ENCODE measurements at regions of chr2 and their contacts with region 1.

Region 1: GRCh38 chr2:195498176-195498575 is 158.8 kb upstream of the SLC39A10 start:
- DNase-seq: peak; percentile 22
- ATAC-seq: peak; percentile 66
- H3K4me3 Mint-ChIP-seq: no peak overlapping the region
- H3K27ac Mint-ChIP-seq: no peak overlapping the region
- H3K4me1 Mint-ChIP-seq: peaks cover 18% of the 10 kb centered on the region
- H3K27me3 Mint-ChIP-seq: no peaks in the 10 kb centered on the region
- CTCF ChIP-seq: no peak

Region 2: GRCh38 chr2:194968558-194968957 is 529.6 kb before region 1 on chr2:
- CTCF ChIA-PET with region 1: no interaction called
- POLR2A ChIA-PET with region 1: no interaction called
- intact Hi-C with region 1: no loop called
- DNase-seq: no peak
- ATAC-seq: no peak
- H3K4me3 Mint-ChIP-seq: no peak overlapping the region
- H3K27ac Mint-ChIP-seq: no peak overlapping the region
- H3K4me1 Mint-ChIP-seq: no peaks in the 10 kb centered on the region
- H3K27me3 Mint-ChIP-seq: no peaks in the 10 kb centered on the region
- CTCF ChIP-seq: no peak

Region 3: DNA sequence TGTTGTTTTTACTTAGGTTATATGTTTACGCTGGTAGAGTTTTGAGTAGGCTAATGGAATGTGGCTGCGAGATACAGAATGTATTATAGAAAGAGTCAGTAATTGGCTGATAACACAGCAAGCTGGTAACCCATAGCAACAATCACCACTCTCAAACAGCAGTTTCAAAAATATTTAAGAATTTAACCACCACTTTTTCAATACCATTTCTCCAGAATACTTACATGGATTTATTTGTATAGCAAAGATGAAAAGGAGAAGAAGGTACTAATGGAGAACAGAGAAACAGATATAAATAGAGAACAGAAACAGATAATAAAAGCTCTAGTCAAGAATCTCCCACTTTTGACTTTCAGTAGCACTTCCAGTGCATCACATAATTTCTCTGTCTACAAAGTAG is 29.4 kb before region 1 on chr2:
- CTCF ChIA-PET with region 1: no interaction called
- POLR2A ChIA-PET with region 1: no interaction called
- intact Hi-C with region 1: no loop called
- DNase-seq: no peak
- ATAC-seq: no peak
- H3K4me3 Mint-ChIP-seq: no peak overlapping the region
- H3K27ac Mint-ChIP-seq: no peak overlapping the region
- H3K4me1 Mint-ChIP-seq: peaks cover 4% of the 10 kb centered on the region
- H3K27me3 Mint-ChIP-seq: no peaks in the 10 kb centered on the region
- CTCF ChIP-seq: no peak

Region 4: GRCh38 chr2:195513119-195513518 is 14.9 kb after region 1 on chr2:
- CTCF ChIA-PET with region 1: interaction called, 10 read pairs
- POLR2A ChIA-PET with region 1: no interaction called
- intact Hi-C with region 1: loop called (anchors 2 kb)
- DNase-seq: no peak
- ATAC-seq: no peak
- H3K4me3 Mint-ChIP-seq: no peak overlapping the region
- H3K27ac Mint-ChIP-seq: no peak overlapping the region
- H3K4me1 Mint-ChIP-seq: peaks cover 10% of the 10 kb centered on the region
- H3K27me3 Mint-ChIP-seq: no peaks in the 10 kb centered on the region
- CTCF ChIP-seq: no peak

Region 5: DNA sequence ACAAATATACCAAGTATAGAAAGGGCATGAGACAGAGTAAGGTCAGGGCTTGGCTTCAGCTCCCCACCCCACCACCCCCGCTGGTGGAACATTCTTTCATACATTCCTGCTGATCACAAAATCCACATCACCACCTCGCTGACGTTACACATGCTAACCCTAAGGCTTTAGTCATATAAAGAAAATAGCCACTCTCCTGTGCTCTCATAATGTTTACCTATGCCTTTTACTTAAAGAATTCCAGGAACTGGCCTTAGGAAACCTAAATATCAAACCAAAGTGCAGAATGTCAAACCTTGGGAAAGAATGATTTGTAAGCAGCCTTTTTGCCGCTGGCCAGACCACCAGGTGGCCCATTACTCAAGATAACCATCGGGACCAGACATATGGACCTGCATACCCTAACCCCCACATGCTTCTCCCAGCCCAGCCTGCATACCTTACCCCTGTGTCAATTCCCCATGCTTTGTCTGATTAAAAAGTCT is 22.5 kb after region 1 on chr2:
- CTCF ChIA-PET with region 1: interaction called, 10 read pairs
- POLR2A ChIA-PET with region 1: no interaction called
- intact Hi-C with region 1: loop called (anchors 2 kb)
- DNase-seq: no peak
- ATAC-seq: no peak
- H3K4me3 Mint-ChIP-seq: no peak overlapping the region
- H3K27ac Mint-ChIP-seq: no peak overlapping the region
- H3K4me1 Mint-ChIP-seq: no peaks in the 10 kb centered on the region
- H3K27me3 Mint-ChIP-seq: no peaks in the 10 kb centered on the region
- CTCF ChIP-seq: no peak

Region 6: DNA sequence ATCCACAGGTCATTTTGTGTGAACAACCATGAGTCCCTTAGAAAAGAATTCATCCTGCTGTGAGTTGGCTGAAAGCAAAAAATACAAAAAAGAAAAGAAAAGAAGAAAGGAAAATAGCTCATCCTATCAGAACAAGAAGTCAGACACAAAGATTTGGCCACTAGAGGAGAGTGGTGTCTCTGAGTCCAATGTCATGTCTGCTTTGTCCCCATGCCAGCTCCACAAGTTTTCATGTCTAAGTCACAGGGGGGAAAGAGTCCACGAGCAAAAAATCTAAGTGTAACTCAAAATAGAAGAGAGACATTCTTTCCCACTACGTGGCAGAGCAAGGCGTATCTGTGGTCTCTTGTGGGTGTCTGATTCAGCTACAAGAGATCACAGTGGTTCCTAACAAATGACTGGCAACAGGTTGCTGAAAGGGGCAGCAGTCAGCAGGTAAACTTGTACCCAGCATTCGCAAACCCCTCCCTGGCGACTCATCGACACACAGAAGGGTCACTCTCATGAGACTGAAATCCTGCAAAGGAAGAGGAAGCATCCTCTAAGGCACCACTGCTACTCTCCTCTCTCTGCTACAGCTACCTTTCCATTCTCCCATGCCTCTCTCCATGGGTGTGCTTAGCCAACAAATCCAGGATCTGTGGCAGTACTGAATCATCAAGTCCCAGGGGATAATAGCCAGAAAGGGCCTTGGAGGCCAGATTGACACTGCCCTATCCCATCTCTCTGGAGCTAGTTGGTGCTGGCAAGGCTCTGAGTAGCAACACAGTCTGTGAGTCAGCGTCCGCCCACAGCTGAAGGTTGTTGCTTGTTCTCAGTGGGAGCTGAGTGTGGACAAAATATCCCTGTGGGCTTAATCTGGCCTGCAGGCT is 35.8 kb after region 1 on chr2:
- CTCF ChIA-PET with region 1: interaction called, 17 read pairs
- POLR2A ChIA-PET with region 1: interaction called, 14 read pairs
- intact Hi-C with region 1: loop called (anchors 1 kb)
- DNase-seq: peak; percentile 28
- ATAC-seq: peak; percentile 73
- H3K4me3 Mint-ChIP-seq: peak overlapping the region; percentile 66
- H3K27ac Mint-ChIP-seq: peak overlapping the region; percentile 97
- H3K4me1 Mint-ChIP-seq: peaks cover 72% of the 10 kb centered on the region
- H3K27me3 Mint-ChIP-seq: no peaks in the 10 kb centered on the region
- CTCF ChIP-seq: no peak

Region 7: GRCh38 chr2:195664528-195664927 is 166.4 kb after region 1 on chr2:
- CTCF ChIA-PET with region 1: interaction called, 123 read pairs
- POLR2A ChIA-PET with region 1: interaction called, 65 read pairs
- intact Hi-C with region 1: loop called (anchors 1 kb)
- DNase-seq: no peak
- ATAC-seq: no peak
- H3K4me3 Mint-ChIP-seq: no peak overlapping the region
- H3K27ac Mint-ChIP-seq: peak overlapping the region; percentile 66
- H3K4me1 Mint-ChIP-seq: peaks cover 60% of the 10 kb centered on the region
- H3K27me3 Mint-ChIP-seq: no peaks in the 10 kb centered on the region
- CTCF ChIP-seq: no peak

Region 8: GRCh38 chr2:195937176-195937575 is 439.0 kb after region 1 on chr2:
- CTCF ChIA-PET with region 1: interaction called, 3 read pairs
- POLR2A ChIA-PET with region 1: interaction called, 5 read pairs
- intact Hi-C with region 1: loop called (anchors 5 kb)
- DNase-seq: no peak
- ATAC-seq: no peak
- H3K4me3 Mint-ChIP-seq: no peak overlapping the region
- H3K27ac Mint-ChIP-seq: no peak overlapping the region
- H3K4me1 Mint-ChIP-seq: no peaks in the 10 kb centered on the region
- H3K27me3 Mint-ChIP-seq: no peaks in the 10 kb centered on the region
- CTCF ChIP-seq: no peak

Measured in activated B cell treated with CpG ODN at 0.5 μM for 24 hours (primary cell).